ENCODE measurements at regions of chr18 and their contacts with region 1.

Region 1: DNA sequence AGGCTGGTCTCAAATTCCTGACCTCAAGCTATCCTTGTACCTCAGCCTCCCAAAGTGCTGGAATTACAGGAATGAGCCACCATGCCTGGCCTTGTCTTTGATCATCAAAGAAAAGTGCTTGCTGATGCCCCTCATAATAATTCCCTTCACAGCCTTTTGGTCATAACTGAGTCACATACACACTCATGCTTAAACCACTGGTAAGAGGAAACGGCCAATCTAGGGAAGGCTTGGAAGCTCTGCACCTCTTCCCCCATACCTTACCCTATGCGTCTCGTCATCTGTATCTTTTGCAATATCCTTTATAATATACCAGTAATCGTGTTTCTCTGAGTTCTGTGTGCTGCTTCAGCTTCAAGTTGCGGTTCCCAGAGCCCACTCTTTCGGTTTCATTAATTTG is 4.8 kb upstream of the RNF138 start:
- DNase-seq: no peak
- ATAC-seq: no peak
- H3K4me3 ChIP-seq: no peak overlapping the region
- H3K27ac ChIP-seq: no peak overlapping the region
- H3K4me1 ChIP-seq: peaks cover 3% of the 10 kb centered on the region; the same call in 1 of the 2 replicates
- H3K27me3 ChIP-seq: no peaks in the 10 kb centered on the region
- CTCF ChIP-seq: no peak

Region 2: GRCh38 chr18:32096946-32097345 is 10.1 kb after region 1 on chr18:
- CTCF ChIA-PET with region 1: no interaction called
- POLR2A ChIA-PET with region 1: interaction called, 13 read pairs
- in situ Hi-C with region 1: no loop called
- intact Hi-C with region 1: no loop called
- DNase-seq: no peak
- ATAC-seq: no peak
- H3K4me3 ChIP-seq: no peak overlapping the region
- H3K27ac ChIP-seq: no peak overlapping the region
- H3K4me1 ChIP-seq: peaks cover 9% of the 10 kb centered on the region
- H3K27me3 ChIP-seq: no peaks in the 10 kb centered on the region
- CTCF ChIP-seq: no peak

Region 3: DNA sequence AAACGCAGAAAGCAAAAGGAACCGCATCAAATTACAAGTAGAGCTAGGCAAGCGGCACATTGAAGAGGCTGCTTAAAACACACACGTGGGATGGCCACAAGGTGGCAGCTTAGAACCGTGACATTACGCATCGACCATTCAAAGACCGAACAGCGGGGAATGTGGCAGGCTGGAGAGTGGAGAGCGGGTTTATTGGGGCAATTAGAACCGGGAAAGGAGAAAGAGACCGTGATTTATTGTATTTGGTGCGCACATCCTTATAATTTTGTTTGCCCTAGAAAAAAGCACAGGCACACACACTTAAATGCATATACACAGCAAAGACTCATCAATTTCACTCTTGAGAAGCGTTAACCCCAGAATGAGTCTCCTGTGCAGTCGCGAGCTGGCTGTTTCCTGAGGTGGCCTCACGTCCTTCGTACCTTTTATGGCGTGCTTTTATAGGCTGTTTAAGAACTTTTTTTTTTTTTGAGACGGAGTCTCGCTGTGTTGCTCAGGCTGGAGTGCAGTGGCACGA is 71.3 kb after region 1 on chr18:
- CTCF ChIA-PET with region 1: no interaction called
- POLR2A ChIA-PET with region 1: no interaction called
- in situ Hi-C with region 1: no loop called
- intact Hi-C with region 1: no loop called
- DNase-seq: peak; percentile 57
- ATAC-seq: peak; percentile 100
- H3K4me3 ChIP-seq: peak overlapping the region; percentile 15 to 43; a peak in 3 of 4 replicates
- H3K27ac ChIP-seq: no peak overlapping the region
- H3K4me1 ChIP-seq: no peaks in the 10 kb centered on the region
- H3K27me3 ChIP-seq: no peaks in the 10 kb centered on the region
- CTCF ChIP-seq: peak; percentile 82

Measured in Panc1 (cell line).